Aorta (tissue), 5 donors: ENCODE measurements at regions of chr6 and their contacts with region 1.

Region 1: GRCh38 chr6:151021896-151022295 is 156.4 kb downstream of the MTHFD1L start:
- DNase-seq: no peak
- ATAC-seq: no peak
- H3K4me3 ChIP-seq: no peak overlapping the region
- H3K27ac ChIP-seq: no peak overlapping the region
- H3K4me1 ChIP-seq: no peaks in the 10 kb centered on the region
- H3K27me3 ChIP-seq: no peaks in the 10 kb centered on the region

Region 2: DNA sequence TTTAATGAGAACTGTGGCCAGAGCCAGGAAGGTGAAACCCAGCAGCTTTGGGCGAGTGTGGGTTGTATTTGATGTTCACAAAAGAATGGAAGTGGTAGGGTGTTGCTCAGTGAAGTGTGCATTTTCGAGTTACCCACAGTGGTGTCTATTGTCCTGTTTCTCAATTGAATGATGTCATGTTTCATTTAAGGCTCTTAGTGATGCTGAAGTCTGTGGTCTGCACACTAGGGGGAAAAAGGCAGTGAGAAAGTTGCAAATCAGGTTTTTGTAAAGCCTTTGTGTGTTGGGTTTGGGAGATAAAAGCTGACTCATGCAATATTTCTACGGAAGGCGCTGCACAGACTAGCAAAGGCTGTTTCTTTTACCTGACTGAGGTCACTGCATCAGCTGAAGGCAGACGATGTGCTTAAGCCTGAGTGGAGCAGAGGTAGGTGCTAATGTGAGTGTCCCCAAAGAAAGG is 301.1 kb before region 1 on chr6:
- intact Hi-C with region 1: no loop called
- DNase-seq: no peak
- ATAC-seq: no peak
- H3K4me3 ChIP-seq: no peak overlapping the region
- H3K27ac ChIP-seq: no peak overlapping the region
- H3K4me1 ChIP-seq: no peaks in the 10 kb centered on the region
- H3K27me3 ChIP-seq: no peaks in the 10 kb centered on the region

Region 3: DNA sequence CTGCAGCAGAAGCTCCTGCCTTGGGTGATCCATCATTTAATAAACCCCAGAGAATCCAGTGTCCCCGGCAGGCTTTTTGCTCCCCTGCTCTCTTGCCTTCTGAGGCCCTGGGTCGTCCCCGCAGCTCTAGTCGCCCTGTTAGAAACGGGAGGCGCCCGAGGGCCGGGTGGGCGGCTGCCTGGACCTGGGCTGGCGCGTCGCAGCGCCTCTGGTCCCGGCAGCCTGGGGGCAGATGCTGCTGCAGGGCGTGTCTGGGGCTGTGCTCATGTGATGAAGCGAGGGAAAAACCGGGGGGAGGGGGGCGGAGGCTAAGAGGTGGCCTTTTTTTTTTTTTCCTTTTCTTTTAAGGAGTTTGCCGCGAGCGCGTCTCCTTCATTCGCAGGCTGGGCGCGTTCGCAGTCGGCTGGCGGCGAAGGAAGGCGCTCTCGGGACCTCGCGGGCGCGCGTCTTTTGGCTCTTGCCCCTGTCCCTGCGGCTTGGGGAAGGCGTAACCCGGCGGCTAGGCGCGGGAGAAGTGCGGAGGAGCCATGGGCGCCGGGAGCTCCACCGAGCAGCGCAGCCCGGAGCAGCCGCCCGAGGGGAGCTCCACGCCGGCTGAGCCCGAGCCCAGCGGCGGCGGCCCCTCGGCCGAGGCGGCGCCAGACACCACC is 218.3 kb after region 1 on chr6:
- intact Hi-C with region 1: loop called (anchors 10 kb)
- DNase-seq: peak; percentile 88 to 91
- ATAC-seq: peak; percentile 91
- H3K4me3 ChIP-seq: peak overlapping the region; percentile 58 to 90
- H3K27ac ChIP-seq: peak overlapping the region; percentile 23 to 76
- H3K4me1 ChIP-seq: no peaks in the 10 kb centered on the region
- H3K27me3 ChIP-seq: no peaks in the 10 kb centered on the region